PC-9 (cell line): ENCODE measurements at regions of chr13 and their contacts with region 1.

Region 1: DNA sequence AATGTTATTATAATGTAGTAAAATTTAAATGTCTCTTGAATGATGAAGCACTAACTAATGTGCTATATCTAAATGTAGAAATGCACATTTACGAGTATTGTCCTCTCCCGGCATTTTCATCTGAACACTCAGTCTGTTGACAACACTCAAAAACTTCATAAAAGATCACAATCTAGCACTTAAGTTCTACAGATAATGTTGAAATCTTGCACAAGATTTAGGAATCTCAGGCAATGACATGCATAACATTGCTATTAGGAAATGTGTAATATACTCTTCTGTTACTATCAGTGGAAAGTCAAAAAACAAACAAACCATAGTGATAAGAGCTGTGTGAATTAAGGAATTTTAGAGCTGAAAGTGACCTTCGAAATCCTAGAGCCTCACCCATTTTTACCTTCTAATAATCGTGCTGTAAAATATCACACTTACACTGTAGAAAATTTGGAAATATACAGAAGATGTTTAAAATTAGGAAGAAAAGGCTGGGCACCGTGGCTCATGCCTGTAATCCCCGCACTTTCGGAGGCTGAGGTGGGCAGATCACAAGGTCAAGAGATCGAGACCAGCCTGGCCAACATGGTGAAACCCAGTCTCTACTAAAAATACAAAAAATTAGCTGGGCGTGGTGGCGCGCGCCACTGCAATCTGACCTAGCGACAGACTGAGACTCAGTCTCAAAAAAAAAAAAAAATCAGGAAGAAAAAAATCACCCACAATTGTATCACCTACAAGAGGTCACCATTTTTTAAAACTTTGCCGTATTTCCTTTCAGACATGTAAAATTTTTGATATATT is 37.7 kb upstream of the XPO4 start:
- DNase-seq: peak in 1 of 2 experiments; percentile 76
- H3K4me3 ChIP-seq: no peak overlapping the region
- H3K27ac ChIP-seq: 0 out of 2 replicates have a peak overlapping the region, but pooled peaks have one; percentile 8
- H3K4me1 ChIP-seq: peaks cover 15% of the 10 kb centered on the region
- H3K27me3 ChIP-seq: no peaks in the 10 kb centered on the region
- CTCF ChIP-seq: no peak

Region 2: DNA sequence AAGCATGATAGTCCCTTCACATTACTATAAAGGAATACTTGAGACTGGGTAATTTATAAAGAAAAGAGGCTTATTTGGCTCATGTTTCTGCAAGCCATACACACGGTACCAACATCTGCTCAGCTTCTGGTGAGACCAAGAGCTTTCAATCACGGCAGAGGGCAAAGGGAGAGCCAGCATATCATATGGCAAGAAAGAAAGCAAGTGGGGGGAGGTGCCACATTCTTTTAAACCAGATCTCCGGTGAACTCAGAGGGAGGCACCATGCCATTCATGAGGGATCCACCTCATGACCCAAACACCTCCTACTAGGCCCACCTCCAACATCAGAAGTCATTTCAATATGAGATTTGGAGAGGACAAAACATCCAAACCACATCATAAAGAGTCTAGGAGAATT is 58.1 kb before region 1 on chr13:
- CTCF ChIA-PET with region 1: no interaction called
- POLR2A ChIA-PET with region 1: no interaction called
- intact Hi-C with region 1: no loop called
- DNase-seq: no peak
- H3K4me3 ChIP-seq: no peak overlapping the region
- H3K27ac ChIP-seq: no peak overlapping the region
- H3K4me1 ChIP-seq: no peaks in the 10 kb centered on the region
- H3K27me3 ChIP-seq: no peaks in the 10 kb centered on the region
- CTCF ChIP-seq: no peak

Region 3: DNA sequence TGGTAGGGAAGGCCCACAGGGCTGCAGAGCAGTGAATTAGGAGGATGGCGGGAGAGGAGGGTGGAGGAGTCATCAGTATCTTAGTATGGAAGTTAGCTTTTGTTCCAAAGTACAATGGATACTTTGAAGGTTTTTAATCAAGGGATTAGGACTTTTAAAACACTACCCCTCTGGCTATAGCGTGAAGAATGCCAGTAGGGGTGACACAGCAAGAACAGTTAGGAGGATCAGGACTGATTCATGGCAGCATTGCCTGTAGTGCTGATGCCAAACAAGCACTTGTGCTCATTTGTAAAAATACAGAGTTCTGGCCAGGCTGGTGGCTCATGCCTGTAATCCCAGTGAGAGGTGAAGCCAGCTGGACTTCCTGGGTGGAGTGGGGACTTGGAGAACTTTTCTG is 189.8 kb after region 1 on chr13:
- CTCF ChIA-PET with region 1: no interaction called
- POLR2A ChIA-PET with region 1: no interaction called
- intact Hi-C with region 1: loop called (anchors 5 kb)
- DNase-seq: no peak
- H3K4me3 ChIP-seq: no peak overlapping the region
- H3K27ac ChIP-seq: no peak overlapping the region
- H3K4me1 ChIP-seq: peaks cover 3% of the 10 kb centered on the region; the same call in 1 of the 2 replicates
- H3K27me3 ChIP-seq: no peaks in the 10 kb centered on the region
- CTCF ChIP-seq: no peak

Region 4: GRCh38 chr13:21476893-21477472 is 536.7 kb after region 1 on chr13:
- CTCF ChIA-PET with region 1: no interaction called
- POLR2A ChIA-PET with region 1: no interaction called
- intact Hi-C with region 1: loop called (anchors 2 kb)
- DNase-seq: peak; percentile 64 to 69
- H3K4me3 ChIP-seq: no peak overlapping the region
- H3K27ac ChIP-seq: no peak overlapping the region
- H3K4me1 ChIP-seq: peaks cover 29% of the 10 kb centered on the region
- H3K27me3 ChIP-seq: no peaks in the 10 kb centered on the region
- CTCF ChIP-seq: peak; percentile 91